Psoas muscle (tissue), 8 donors: ENCODE measurements at regions of chr1 and their contacts with region 1.

Region 1: DNA sequence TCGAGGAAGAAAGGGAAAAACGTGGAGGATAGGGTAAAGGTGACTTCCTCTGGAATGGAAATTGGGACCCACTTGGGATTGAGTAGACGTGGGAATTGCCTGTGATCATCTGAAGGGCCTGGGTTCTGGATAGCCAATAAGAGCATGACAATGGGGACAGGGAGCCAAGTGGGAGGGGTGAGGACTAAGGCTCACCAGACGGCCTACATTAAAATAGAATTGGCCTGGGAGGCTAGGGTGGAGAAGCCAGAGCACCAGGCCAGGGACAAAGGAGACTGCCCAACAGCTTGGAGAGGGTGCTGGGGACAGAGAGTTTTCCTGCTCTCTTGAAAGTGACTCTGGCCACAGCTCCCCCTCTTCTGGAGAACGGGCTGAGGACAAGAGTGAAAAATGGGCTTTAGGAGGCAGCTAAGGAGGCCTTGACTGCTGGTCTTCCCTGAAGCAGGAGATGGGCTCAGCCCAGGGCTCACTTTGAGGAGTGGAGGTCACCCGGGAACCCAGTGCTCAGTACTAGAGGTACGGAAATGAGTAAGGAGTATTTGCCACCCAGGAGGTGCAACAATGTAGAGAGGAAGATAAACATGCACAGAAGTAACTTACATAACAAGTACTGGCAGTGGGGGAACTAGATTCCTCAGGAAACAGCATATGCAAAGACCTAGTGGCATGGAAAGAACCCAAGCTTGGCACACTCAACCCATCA is 18.8 kb downstream of the INKA2 start:
- DNase-seq: peak in 1 of 2 donors; percentile 70
- ATAC-seq: peak; percentile 56 to 82 (median 74)
- H3K4me3 ChIP-seq: no peak overlapping the region
- H3K27ac ChIP-seq: peak overlapping the region; percentile 84
- H3K4me1 ChIP-seq: peaks cover 57% of the 10 kb centered on the region
- H3K27me3 ChIP-seq: no peaks in the 10 kb centered on the region
- CTCF ChIP-seq: no peak

Region 2: DNA sequence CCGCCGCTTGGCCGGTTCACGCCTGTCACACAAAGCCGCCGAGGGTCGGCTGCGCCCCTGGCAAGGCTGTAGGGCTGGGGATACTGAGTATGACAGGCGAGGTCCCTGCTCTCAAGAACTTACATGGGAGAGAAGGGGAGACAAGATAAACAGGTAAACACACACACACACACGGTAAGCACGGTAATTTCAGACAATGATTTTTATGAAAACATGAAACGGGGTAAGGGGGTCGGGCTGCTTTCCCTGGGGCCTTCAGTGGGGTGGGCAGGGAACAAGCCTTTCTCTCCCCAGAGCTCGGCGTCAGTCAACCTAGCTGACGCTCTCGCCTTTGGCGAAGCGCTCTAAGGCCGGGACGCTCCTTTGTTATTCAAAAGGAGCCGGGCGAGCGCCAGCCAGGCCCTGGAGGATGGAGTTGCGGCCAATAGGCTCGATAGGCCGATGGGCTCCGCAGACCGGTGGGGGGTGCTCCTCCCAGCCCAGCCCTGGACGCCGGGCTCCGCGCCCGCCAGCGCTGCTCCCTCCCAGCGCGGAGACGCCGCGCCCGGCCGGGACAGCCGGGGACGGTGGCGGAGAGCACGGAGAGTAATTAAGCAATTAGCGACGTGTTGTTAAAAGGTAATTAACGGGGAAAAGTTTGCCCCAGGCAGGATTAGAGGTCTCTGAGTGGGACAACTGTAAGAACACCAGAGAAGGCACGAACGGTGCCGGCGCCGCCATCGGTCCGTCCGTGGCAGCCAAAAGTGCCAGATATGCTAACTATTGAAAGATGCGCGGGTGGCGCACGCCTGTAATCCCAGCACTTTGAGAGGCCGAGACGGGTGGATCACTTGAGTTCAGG is 19.7 kb after region 1 on chr1:
- intact Hi-C with region 1: loop called in 1 of 2 experiments (anchors 2 kb)
- DNase-seq: peak; percentile 79 to 86
- ATAC-seq: peak; percentile 48 to 67 (median 62)
- H3K4me3 ChIP-seq: peak overlapping the region; percentile 92
- H3K27ac ChIP-seq: peak overlapping the region; percentile 95
- H3K4me1 ChIP-seq: peaks cover 29% of the 10 kb centered on the region
- H3K27me3 ChIP-seq: peaks cover 0 to 4% (median 0%) of the 10 kb centered on the region in 3 donors
- CTCF ChIP-seq: no peak

Region 3: GRCh38 chr1:111747282-111747734 is 26.9 kb after region 1 on chr1:
- intact Hi-C with region 1: loop called (anchors 2 kb)
- DNase-seq: peak in 1 of 2 donors; percentile 31
- ATAC-seq: peak; percentile 69 to 89 (median 82)
- H3K4me3 ChIP-seq: no peak overlapping the region
- H3K27ac ChIP-seq: no peak overlapping the region
- H3K4me1 ChIP-seq: peaks cover 22% of the 10 kb centered on the region
- H3K27me3 ChIP-seq: peaks cover 0 to 4% (median 0%) of the 10 kb centered on the region in 3 donors
- CTCF ChIP-seq: peak; percentile 60

Region 4: GRCh38 chr1:111755331-111756123 is 35.1 kb after region 1 on chr1 and contains the start of gene DDX20:
- intact Hi-C with region 1: loop called in 1 of 2 experiments (anchors 1 kb)
- DNase-seq: peak; percentile 94 to 97
- ATAC-seq: peak; percentile 98 to 99 (median 98)
- H3K4me3 ChIP-seq: peak within 1 kb of the TSS; percentile 95
- H3K27ac ChIP-seq: peak within 1 kb of the TSS; percentile 91
- H3K4me1 ChIP-seq: peaks cover 21% of the 10 kb centered on the region
- H3K27me3 ChIP-seq: no peaks in the 10 kb centered on the region
- CTCF ChIP-seq: peak; percentile 83
- total RNA-seq, gene DDX20: 6.2 to 11.6 (median 7.6) TPM